ENCODE measurements at regions of chr19 and their contacts with region 1.

Region 1: GRCh38 chr19:12847159-12848139 is 9.1 kb downstream of the MAST1 start:
- DNase-seq: peak; percentile 91
- ATAC-seq: peak; percentile 99
- H3K4me3 Mint-ChIP-seq: peak overlapping the region; percentile 67
- H3K27ac Mint-ChIP-seq: peak overlapping the region; percentile 63
- H3K4me1 Mint-ChIP-seq: peaks cover 3% of the 10 kb centered on the region
- H3K27me3 Mint-ChIP-seq: peaks cover 25% of the 10 kb centered on the region
- CTCF ChIP-seq: peak; percentile 100

Region 2: DNA sequence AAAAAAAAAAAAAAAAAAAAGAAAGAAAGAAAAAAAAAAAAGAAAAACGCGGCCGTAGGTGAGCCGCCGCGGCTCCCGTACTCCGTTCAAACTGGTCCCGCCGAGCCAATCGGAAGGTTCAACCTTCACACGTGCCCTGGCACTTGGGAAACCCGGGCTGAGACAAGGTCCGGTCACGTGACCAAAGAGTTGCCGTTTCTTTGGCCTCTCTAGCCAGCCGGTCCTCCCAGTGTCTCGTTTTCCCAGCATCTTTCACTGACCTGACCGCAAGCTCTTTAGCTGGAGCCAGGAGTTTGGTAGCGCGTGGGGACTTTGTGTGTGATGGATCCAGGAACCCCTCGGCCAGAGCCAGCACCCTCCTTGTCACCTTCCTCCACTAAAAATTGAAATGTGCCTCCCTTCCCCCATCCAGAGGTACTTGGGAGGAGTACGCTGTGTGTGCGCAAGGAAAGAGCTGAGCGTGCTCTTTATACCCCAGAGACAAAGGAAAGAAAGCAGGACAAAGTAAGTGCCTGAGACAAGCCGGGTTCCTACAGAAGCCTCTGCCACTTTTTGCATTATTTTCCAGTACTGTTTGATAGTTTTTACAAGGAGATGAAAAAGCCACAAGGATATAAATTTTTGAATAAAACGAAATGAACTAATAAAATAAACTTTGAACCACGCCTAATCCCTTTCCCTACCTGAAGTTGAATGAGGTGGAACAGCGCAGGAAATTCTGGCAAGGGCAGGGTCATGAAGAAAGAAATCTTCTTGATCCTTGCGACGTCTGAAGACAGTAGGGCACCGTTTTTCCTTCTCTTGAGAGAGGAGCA is 124.7 kb before region 1 on chr19:
- CTCF ChIA-PET with region 1: interaction called, 15 read pairs
- POLR2A ChIA-PET with region 1: no interaction called
- intact Hi-C with region 1: no loop called
- DNase-seq: peak; percentile 98
- ATAC-seq: peak; percentile 82
- H3K4me3 Mint-ChIP-seq: peak overlapping the region; percentile 96
- H3K27ac Mint-ChIP-seq: peak overlapping the region; percentile 91
- H3K4me1 Mint-ChIP-seq: peaks cover 29% of the 10 kb centered on the region
- H3K27me3 Mint-ChIP-seq: no peaks in the 10 kb centered on the region
- CTCF ChIP-seq: no peak

Region 3: DNA sequence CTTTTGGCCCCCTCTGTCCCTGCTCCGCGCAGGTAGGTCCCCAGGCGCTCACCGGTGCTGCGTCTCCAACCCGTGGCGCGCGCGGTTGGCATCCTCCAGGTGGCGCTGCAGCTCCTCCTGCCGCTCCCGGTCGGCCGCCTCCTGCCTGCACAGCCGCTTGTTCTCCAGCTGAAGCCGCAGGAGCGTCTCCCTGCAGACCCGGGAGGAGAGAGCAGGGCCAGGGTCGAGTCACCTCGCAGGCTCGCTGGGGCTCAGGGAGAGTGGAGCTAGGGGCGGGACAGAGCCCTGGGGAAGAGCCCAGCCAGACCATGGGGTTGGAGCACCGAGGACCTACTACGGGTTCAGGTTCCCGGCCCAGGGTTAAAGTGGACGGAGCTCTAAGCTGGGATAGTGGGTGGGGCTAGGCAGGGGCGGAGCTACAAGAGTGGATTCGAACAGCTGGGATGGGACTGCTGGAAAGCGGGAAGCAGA is 81.4 kb before region 1 on chr19:
- CTCF ChIA-PET with region 1: interaction called, 118 read pairs
- POLR2A ChIA-PET with region 1: no interaction called
- intact Hi-C with region 1: loop called (anchors 5 kb)
- DNase-seq: peak; percentile 81
- ATAC-seq: peak; percentile 61
- H3K4me3 Mint-ChIP-seq: no peak overlapping the region
- H3K27ac Mint-ChIP-seq: no peak overlapping the region
- H3K4me1 Mint-ChIP-seq: peaks cover 3% of the 10 kb centered on the region
- H3K27me3 Mint-ChIP-seq: no peaks in the 10 kb centered on the region
- CTCF ChIP-seq: peak; percentile 69

Region 4: DNA sequence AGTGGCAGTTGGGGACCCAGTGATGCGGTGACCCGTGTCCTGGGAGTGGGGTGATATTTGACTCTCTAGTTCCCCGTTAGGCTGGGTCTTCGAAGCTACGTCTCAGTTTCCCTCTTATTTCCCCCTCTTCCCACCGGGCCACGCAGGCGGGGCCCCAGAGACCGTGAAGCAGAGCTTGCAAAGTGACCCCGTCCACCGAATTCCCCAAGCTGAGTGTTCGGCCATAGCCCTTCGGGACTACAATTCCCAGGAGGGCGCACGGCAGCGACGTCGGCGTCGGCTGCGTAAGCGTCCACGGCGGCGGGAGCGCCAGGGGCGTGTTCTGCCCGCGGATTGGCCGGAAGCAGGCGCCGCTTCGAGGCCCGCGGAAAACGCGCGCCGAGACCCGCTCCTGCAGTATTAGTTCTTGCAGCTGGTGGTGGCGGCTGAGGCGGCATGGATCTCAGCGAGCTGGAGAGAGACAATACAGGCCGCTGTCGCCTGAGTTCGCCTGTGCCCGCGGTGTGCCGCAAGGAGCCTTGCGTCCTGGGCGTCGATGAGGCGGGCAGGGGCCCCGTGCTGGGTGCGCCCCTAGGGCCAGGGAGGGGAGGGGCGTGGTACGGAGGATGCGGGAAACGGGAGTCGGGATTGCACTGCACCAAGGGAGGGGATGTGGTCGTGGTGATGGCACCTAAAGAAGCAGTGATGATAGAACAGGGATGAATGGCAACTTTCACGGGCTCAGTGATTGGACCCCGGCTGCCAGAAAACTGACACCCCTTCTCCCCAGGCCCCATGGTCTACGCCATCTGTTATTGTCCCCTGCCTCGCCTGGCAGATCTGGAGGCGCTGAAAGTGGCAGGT is 41.0 kb before region 1 on chr19 and contains the start of gene RNASEH2A:
- CTCF ChIA-PET with region 1: interaction called, 26 read pairs
- POLR2A ChIA-PET with region 1: interaction called, 4 read pairs
- intact Hi-C with region 1: no loop called
- DNase-seq: peak; percentile 93
- ATAC-seq: peak; percentile 91
- H3K4me3 Mint-ChIP-seq: peak within 1 kb of the TSS; percentile 86
- H3K27ac Mint-ChIP-seq: peak within 1 kb of the TSS; percentile 89
- H3K4me1 Mint-ChIP-seq: peaks cover 18% of the 10 kb centered on the region
- H3K27me3 Mint-ChIP-seq: peaks cover 2% of the 10 kb centered on the region
- CTCF ChIP-seq: no peak
- total RNA-seq, gene RNASEH2A: 40.3 to 44.1 TPM

Region 5: GRCh38 chr19:12859546-12859945 is 12.1 kb after region 1 on chr19:
- CTCF ChIA-PET with region 1: interaction called, 38 read pairs
- POLR2A ChIA-PET with region 1: interaction called, 3 read pairs
- intact Hi-C with region 1: no loop called
- DNase-seq: no peak
- ATAC-seq: no peak
- H3K4me3 Mint-ChIP-seq: no peak overlapping the region
- H3K27ac Mint-ChIP-seq: no peak overlapping the region
- H3K4me1 Mint-ChIP-seq: no peaks in the 10 kb centered on the region
- H3K27me3 Mint-ChIP-seq: no peaks in the 10 kb centered on the region
- CTCF ChIP-seq: no peak

Region 6: GRCh38 chr19:12985049-12985776 is 137.8 kb after region 1 on chr19:
- CTCF ChIA-PET with region 1: no interaction called
- POLR2A ChIA-PET with region 1: no interaction called
- intact Hi-C with region 1: no loop called
- DNase-seq: peak; percentile 44
- ATAC-seq: peak; percentile 45
- H3K4me3 Mint-ChIP-seq: no peak overlapping the region
- H3K27ac Mint-ChIP-seq: no peak overlapping the region
- H3K4me1 Mint-ChIP-seq: peaks cover 2% of the 10 kb centered on the region
- H3K27me3 Mint-ChIP-seq: peaks cover 4% of the 10 kb centered on the region
- CTCF ChIP-seq: no peak